ENCODE measurements at regions of chr3 and their contacts with region 1.

Region 1: DNA sequence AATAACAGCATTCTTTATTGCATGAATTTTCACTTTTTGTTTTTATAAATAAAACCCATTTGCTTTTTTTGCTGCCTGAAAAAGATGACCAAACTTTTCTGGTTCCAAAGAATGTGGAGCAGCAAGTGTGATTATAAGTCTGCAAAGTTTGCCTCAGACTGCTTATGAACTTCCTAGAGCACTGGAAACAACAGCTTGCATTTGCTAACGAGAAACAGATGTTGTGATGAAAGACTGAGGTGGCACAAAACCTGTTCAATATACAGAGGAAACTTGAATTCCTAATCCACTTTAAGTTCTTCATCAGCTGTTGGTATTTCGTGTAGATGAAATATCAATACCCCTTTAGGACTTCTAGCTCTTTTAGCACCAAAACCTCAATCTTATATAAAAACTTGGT is 9.3 kb downstream of the ZPLD1 start:
- DNase-seq: no peak
- ATAC-seq: no peak
- H3K4me3 ChIP-seq: no peak overlapping the region
- H3K27ac ChIP-seq: no peak overlapping the region
- H3K4me1 ChIP-seq: no peaks in the 10 kb centered on the region
- H3K27me3 ChIP-seq: no peaks in the 10 kb centered on the region
- CTCF ChIP-seq: no peak

Region 2: DNA sequence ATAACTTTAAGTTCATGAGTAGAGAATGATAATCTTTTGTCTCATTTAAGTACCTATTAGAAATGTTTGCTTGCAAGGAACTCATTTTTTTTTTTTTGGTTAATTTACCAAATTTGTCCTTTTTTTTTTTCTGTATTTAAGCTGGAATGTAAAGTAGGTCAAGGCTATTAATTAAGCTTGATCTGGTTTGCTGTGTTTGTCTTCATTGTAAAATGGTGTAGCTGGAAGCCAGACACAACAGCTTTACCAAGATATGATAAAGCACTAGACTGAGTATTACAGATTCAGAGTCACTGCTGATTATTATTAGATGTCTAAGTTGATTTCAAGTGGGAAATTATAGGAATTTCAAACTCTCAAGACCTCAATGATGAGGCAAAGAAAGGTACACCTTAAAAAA is 24.3 kb before region 1 on chr3:
- CTCF ChIA-PET with region 1: no interaction called
- POLR2A ChIA-PET with region 1: interaction called, 13 read pairs
- in situ Hi-C with region 1: no loop called
- intact Hi-C with region 1: no loop called
- DNase-seq: no peak
- ATAC-seq: no peak
- H3K4me3 ChIP-seq: no peak overlapping the region
- H3K27ac ChIP-seq: no peak overlapping the region
- H3K4me1 ChIP-seq: no peaks in the 10 kb centered on the region
- H3K27me3 ChIP-seq: no peaks in the 10 kb centered on the region
- CTCF ChIP-seq: no peak

Region 3: DNA sequence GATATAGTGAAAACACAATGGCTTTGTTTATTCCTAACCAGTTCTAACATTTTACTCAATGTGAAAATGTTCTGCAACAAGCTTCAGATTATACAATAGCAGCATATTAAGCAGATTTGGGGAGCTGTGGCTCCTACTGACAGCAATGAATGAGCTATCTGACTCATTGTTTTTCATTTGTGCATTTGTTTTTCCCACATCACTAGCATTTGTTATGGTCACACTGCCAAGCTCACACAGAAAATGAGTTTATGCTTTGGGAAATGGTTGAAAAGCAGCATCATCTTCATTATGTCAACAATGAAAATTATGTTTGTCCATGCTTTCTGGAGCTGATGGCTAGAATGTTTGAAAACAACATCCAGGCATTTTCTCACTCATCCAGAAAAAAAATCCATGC is 44.2 kb after region 1 on chr3:
- CTCF ChIA-PET with region 1: no interaction called
- POLR2A ChIA-PET with region 1: no interaction called
- in situ Hi-C with region 1: no loop called
- intact Hi-C with region 1: no loop called
- DNase-seq: no peak
- ATAC-seq: no peak
- H3K4me3 ChIP-seq: no peak overlapping the region
- H3K27ac ChIP-seq: no peak overlapping the region
- H3K4me1 ChIP-seq: no peaks in the 10 kb centered on the region
- H3K27me3 ChIP-seq: no peaks in the 10 kb centered on the region
- CTCF ChIP-seq: no peak

Region 4: GRCh38 chr3:102802819-102803420 is 358.8 kb after region 1 on chr3:
- CTCF ChIA-PET with region 1: no interaction called
- POLR2A ChIA-PET with region 1: no interaction called
- in situ Hi-C with region 1: no loop called
- intact Hi-C with region 1: no loop called
- DNase-seq: no peak
- ATAC-seq: no peak
- H3K4me3 ChIP-seq: no peak overlapping the region
- H3K27ac ChIP-seq: no peak overlapping the region
- H3K4me1 ChIP-seq: no peaks in the 10 kb centered on the region
- H3K27me3 ChIP-seq: no peaks in the 10 kb centered on the region
- CTCF ChIP-seq: no peak

Measured in Panc1 (cell line).